H1 (cell line): ENCODE measurements at regions of chr10 and their contacts with region 1.

Region 1: GRCh38 chr10:114550756-114551635 is 107.1 kb downstream of the ABLIM1 start:
- DNase-seq: no peak
- H3K4me3 ChIP-seq: no peak overlapping the region
- H3K27ac ChIP-seq: no peak overlapping the region
- H3K4me1 ChIP-seq: peaks cover 0 to 4% (median 0%) of the 10 kb centered on the region in 4 experiments; a peak in 1 of 7 replicates
- H3K27me3 ChIP-seq: no peaks in the 10 kb centered on the region
- CTCF ChIP-seq: peak in 1 of 3 experiments; percentile 8; a peak in 1 of 4 replicates
- EP300 ChIP-seq: no peak
- POLR2A ChIP-seq: no peak
- RAD21 ChIP-seq: peak in 1 of 2 experiments; percentile 39; a peak in 3 of 4 replicates

Region 2: DNA sequence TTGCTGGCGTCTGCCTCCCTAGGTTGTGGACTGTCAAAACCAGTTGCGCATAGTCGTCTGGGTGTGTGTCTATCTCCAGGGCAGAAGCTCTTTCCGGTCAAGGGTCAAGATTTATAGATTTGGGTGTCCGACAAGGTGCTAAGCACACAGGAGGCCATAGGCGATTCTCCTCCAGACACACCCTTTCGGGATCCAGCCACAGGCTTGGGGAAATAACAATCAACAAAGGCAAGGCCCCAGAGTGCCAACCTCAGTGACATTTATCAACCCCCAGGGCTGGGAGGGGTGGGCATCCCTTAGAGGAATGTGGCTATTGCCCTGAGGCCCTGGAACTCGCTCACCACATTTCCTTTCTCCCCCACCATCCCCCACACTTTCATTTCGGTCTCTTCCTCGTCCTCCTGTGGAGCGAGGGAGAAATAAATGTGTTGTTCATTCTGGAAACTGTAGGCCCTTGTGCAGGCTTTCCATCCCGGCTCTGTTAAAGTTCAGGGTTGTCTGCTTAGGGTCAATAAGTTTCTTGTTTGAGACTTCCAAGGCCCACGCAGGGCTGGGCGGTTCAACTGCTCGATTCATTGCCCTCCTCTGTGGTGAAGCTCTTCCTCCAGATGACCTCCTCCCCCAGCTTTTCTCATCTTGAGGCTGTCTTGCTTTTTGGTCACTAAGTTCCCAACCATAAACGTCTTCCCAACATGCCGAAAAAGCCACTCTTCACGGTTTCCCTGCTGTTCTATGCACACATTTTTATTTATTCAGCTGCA is 204.5 kb before region 1 on chr10:
- CTCF ChIA-PET with region 1: no interaction called
- POLR2A ChIA-PET with region 1: no interaction called
- DNase-seq: no peak
- H3K4me3 ChIP-seq: no peak overlapping the region
- H3K27ac ChIP-seq: no peak overlapping the region
- H3K4me1 ChIP-seq: peaks cover 0 to 7% (median 0%) of the 10 kb centered on the region in 4 experiments; a peak in 3 of 7 replicates
- H3K27me3 ChIP-seq: no peaks in the 10 kb centered on the region
- CTCF ChIP-seq: no peak
- EP300 ChIP-seq: no peak
- POLR2A ChIP-seq: no peak
- RAD21 ChIP-seq: no peak

Region 3: DNA sequence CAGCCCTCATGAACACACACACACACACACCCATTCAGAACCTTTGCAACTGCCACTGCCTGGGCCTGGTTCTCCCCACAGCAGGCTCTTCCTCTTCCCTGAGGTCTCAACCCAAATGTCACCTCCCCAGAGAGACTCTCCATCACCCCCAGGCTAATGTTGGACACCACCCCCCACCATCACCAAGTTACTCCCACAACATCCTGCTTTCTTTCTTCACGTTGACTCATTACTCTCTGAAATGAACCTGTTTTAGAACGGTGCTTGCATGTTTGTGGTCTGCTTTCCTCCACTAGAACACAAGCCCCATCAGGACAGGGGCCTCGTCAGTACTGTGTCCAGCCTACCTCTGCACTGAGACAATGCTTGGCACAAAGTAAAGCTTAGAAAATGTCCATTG is 162.7 kb before region 1 on chr10:
- CTCF ChIA-PET with region 1: no interaction called
- POLR2A ChIA-PET with region 1: no interaction called
- DNase-seq: no peak
- H3K4me3 ChIP-seq: no peak overlapping the region
- H3K27ac ChIP-seq: no peak overlapping the region
- H3K4me1 ChIP-seq: peaks cover 0 to 13% (median 2%) of the 10 kb centered on the region in 4 experiments; a peak in 3 of 7 replicates
- H3K27me3 ChIP-seq: no peaks in the 10 kb centered on the region
- CTCF ChIP-seq: no peak
- EP300 ChIP-seq: no peak
- POLR2A ChIP-seq: no peak
- RAD21 ChIP-seq: no peak

Region 4: DNA sequence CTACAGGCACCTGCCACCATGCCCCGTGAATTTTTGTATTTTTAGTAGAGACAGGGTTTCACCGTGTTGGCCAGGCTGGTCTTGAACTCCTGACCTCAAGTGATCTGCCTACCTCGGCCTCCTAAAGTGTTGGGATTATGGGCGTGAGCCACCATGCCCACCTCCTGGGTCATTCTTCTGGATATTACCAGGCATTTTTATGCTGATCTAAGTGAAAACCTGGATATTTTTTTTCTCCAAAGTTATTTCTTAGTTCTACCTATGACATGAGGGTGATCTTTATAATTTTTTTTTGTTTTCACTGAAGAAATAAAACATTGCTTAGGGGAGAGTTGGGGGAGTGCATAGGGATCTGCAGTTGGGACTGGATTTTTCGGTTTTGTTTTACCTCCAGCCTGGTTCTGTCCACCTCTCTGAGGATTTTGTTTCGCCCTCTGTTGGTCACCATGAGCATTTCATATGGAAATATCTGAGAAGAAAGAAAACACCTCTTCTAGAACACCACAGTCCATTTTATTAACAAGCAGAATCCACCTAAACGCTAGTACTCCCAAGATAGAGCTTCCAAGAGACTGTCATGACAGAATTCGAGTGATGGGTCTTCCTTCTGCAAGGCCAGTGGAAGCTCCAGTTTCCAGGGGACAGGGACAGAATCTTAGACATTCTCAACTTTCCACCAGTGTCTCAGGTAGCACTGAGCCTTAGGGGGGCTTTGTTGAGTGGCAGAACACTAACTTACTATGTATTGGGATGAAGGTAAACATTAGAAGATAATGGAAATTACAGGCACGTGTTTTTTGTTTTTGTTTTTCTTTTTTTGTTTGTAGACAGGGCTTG is 113.3 kb before region 1 on chr10:
- CTCF ChIA-PET with region 1: interaction called, 28 read pairs
- POLR2A ChIA-PET with region 1: no interaction called
- DNase-seq: no peak
- H3K4me3 ChIP-seq: no peak overlapping the region
- H3K27ac ChIP-seq: no peak overlapping the region
- H3K4me1 ChIP-seq: no peaks in the 10 kb centered on the region
- H3K27me3 ChIP-seq: no peaks in the 10 kb centered on the region
- CTCF ChIP-seq: peak in 2 of 3 experiments; percentile 31 to 47; a peak in 2 of 4 replicates
- EP300 ChIP-seq: no peak
- POLR2A ChIP-seq: no peak
- RAD21 ChIP-seq: peak; percentile 49 to 57

Region 5: GRCh38 chr10:114486938-114487814 is 63.8 kb before region 1 on chr10:
- CTCF ChIA-PET with region 1: interaction called, 27 read pairs
- POLR2A ChIA-PET with region 1: no interaction called
- DNase-seq: no peak
- H3K4me3 ChIP-seq: no peak overlapping the region
- H3K27ac ChIP-seq: no peak overlapping the region
- H3K4me1 ChIP-seq: peaks cover 5 to 10% (median 7%) of the 10 kb centered on the region in 4 experiments; a peak in 5 of 7 replicates
- H3K27me3 ChIP-seq: no peaks in the 10 kb centered on the region
- CTCF ChIP-seq: peak in 1 of 3 experiments; percentile 22; a peak in 1 of 4 replicates
- EP300 ChIP-seq: no peak
- POLR2A ChIP-seq: no peak
- RAD21 ChIP-seq: 0 out of 4 replicates have a peak, but pooled peaks of 1 of the 2 experiments have one; percentile 10

Region 6: GRCh38 chr10:114532226-114532625 is 18.8 kb before region 1 on chr10:
- CTCF ChIA-PET with region 1: interaction called, 21 read pairs
- POLR2A ChIA-PET with region 1: no interaction called
- DNase-seq: no peak
- H3K4me3 ChIP-seq: no peak overlapping the region
- H3K27ac ChIP-seq: no peak overlapping the region
- H3K4me1 ChIP-seq: no peaks in the 10 kb centered on the region; a peak in 1 of 7 replicates
- H3K27me3 ChIP-seq: peaks cover 0 to 3% (median 0%) of the 10 kb centered on the region in 4 experiments; a peak in 2 of 7 replicates
- CTCF ChIP-seq: no peak
- EP300 ChIP-seq: no peak
- POLR2A ChIP-seq: no peak
- RAD21 ChIP-seq: no peak

Region 7: GRCh38 chr10:114694752-114695151 is 143.8 kb after region 1 on chr10:
- CTCF ChIA-PET with region 1: interaction called, 155 read pairs
- POLR2A ChIA-PET with region 1: no interaction called
- DNase-seq: peak in 1 of 2 experiments; percentile 81
- H3K4me3 ChIP-seq: no peak overlapping the region
- H3K27ac ChIP-seq: no peak overlapping the region
- H3K4me1 ChIP-seq: no peaks in the 10 kb centered on the region
- H3K27me3 ChIP-seq: no peaks in the 10 kb centered on the region
- CTCF ChIP-seq: peak; percentile 73 to 86 (median 83)
- EP300 ChIP-seq: no peak
- POLR2A ChIP-seq: no peak
- RAD21 ChIP-seq: peak; percentile 79 to 85

Region 8: GRCh38 chr10:114714281-114714741 is 163.3 kb after region 1 on chr10:
- CTCF ChIA-PET with region 1: interaction called, 10 read pairs
- POLR2A ChIA-PET with region 1: no interaction called
- DNase-seq: no peak
- H3K4me3 ChIP-seq: no peak overlapping the region
- H3K27ac ChIP-seq: no peak overlapping the region
- H3K4me1 ChIP-seq: peaks cover 0 to 7% (median 3%) of the 10 kb centered on the region in 4 experiments; a peak in 2 of 7 replicates
- H3K27me3 ChIP-seq: no peaks in the 10 kb centered on the region
- CTCF ChIP-seq: no peak
- EP300 ChIP-seq: no peak
- POLR2A ChIP-seq: no peak
- RAD21 ChIP-seq: no peak